Transverse colon (tissue), 4 donors: ENCODE measurements at regions of chr10 and their contacts with region 1.

Region 1: GRCh38 chr10:114550756-114551635 is 107.1 kb downstream of the ABLIM1 start:
- DNase-seq: peak; percentile 80
- H3K4me3 ChIP-seq: peak overlapping the region in 2 of 4 donors; percentile 8 to 41
- H3K27ac ChIP-seq: peak overlapping the region; percentile 58 to 71 (median 68)
- H3K4me1 ChIP-seq: peaks cover 0 to 22% (median 11%) of the 10 kb centered on the region in 4 donors
- H3K27me3 ChIP-seq: no peaks in the 10 kb centered on the region
- CTCF ChIP-seq: peak; percentile 54 to 78 (median 66)
- EP300 ChIP-seq: no peak
- POLR2A ChIP-seq: no peak

Region 2: DNA sequence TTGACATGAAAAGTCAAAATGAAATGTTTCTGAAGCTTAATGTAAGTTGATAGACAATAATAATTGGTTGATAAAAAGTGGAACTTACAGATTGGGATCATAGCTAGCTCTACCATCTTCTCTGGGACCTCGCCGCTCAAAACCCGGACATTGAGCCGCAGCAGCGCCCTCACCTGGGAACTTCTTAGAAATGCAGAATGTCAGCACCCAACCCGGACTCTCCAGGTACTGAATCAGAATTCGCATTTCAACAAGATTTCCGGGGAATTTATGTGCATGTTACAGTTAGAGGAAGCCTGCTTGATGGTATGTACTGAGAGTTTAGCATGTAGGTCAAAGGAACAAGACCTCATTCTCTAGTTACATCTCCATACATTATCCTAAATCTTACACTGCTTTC is 143.8 kb after region 1 on chr10:
- in situ Hi-C with region 1: loop called in 3 of 4 experiments (anchors 5 to 10 kb)
- intact Hi-C with region 1: no loop called
- DNase-seq: peak; percentile 56
- H3K4me3 ChIP-seq: no peak overlapping the region
- H3K27ac ChIP-seq: no peak overlapping the region
- H3K4me1 ChIP-seq: peaks cover 0 to 4% (median 0%) of the 10 kb centered on the region in 4 donors
- H3K27me3 ChIP-seq: no peaks in the 10 kb centered on the region
- CTCF ChIP-seq: peak; percentile 42 to 65 (median 45)
- EP300 ChIP-seq: no peak
- POLR2A ChIP-seq: no peak